ENCODE measurements at regions of chr6 and their contacts with region 1.

Region 1: GRCh38 chr6:57089687-57090460 is at the start of gene ZNF451:
- DNase-seq: peak; percentile 98
- H3K4me3 Mint-ChIP-seq: peak within 1 kb of the TSS; percentile 88
- H3K27ac Mint-ChIP-seq: peak within 1 kb of the TSS; percentile 89
- H3K4me1 Mint-ChIP-seq: peaks cover 32% of the 10 kb centered on the region
- H3K27me3 Mint-ChIP-seq: no peaks in the 10 kb centered on the region
- total RNA-seq, gene ZNF451: 43.8 to 46.2 TPM

Region 2: GRCh38 chr6:57048577-57048976 is 41.3 kb before region 1 on chr6:
- CTCF ChIA-PET with region 1: no interaction called
- intact Hi-C with region 1: loop called (anchors 1 kb)
- DNase-seq: no peak
- H3K4me3 Mint-ChIP-seq: peak overlapping the region; percentile 68
- H3K27ac Mint-ChIP-seq: no peak overlapping the region
- H3K4me1 Mint-ChIP-seq: peaks cover 21% of the 10 kb centered on the region
- H3K27me3 Mint-ChIP-seq: peaks cover 14% of the 10 kb centered on the region

Region 3: GRCh38 chr6:57075092-57075491 is 14.8 kb before region 1 on chr6:
- CTCF ChIA-PET with region 1: no interaction called
- intact Hi-C with region 1: no loop called
- DNase-seq: no peak
- H3K4me3 Mint-ChIP-seq: no peak overlapping the region
- H3K27ac Mint-ChIP-seq: no peak overlapping the region
- H3K4me1 Mint-ChIP-seq: no peaks in the 10 kb centered on the region
- H3K27me3 Mint-ChIP-seq: no peaks in the 10 kb centered on the region